ENCODE measurements at regions of chr2 and their contacts with region 1.

Region 1: DNA sequence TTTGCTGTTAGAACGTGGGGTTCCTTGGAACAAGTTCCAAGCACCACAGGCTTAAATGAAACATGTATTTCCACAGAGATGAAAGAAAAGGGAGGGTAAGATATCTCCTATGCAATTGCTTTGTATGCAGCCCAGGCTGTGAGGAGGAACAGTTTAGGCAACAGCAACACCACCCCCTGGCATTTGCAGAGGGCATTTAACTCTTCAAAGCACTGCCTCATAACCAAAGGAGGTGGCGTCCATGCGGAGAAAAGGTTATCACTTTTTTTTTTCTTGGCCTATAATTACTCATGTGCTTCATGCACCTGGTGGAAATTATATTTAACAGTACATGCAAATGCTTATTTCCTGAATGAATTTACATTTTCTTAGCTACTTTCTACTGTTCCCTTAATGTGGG is 286.0 kb downstream of the LPIN1 start:
- DNase-seq: peak; percentile 71
- ATAC-seq: peak; percentile 91
- H3K4me3 ChIP-seq: no peak overlapping the region
- H3K27ac ChIP-seq: 0 out of 2 replicates have a peak overlapping the region, but pooled peaks have one; percentile 1
- H3K4me1 ChIP-seq: peaks cover 44% of the 10 kb centered on the region
- H3K27me3 ChIP-seq: no peaks in the 10 kb centered on the region
- CTCF ChIP-seq: peak; percentile 36 to 45 (median 45); a peak in 4 of 6 replicates
- EP300 ChIP-seq: 0 out of 4 replicates have a peak, but pooled peaks of 1 of the 2 experiments have one; percentile 9
- POLR2A ChIP-seq: no peak
- RAD21 ChIP-seq: peak; percentile 65

Region 2: DNA sequence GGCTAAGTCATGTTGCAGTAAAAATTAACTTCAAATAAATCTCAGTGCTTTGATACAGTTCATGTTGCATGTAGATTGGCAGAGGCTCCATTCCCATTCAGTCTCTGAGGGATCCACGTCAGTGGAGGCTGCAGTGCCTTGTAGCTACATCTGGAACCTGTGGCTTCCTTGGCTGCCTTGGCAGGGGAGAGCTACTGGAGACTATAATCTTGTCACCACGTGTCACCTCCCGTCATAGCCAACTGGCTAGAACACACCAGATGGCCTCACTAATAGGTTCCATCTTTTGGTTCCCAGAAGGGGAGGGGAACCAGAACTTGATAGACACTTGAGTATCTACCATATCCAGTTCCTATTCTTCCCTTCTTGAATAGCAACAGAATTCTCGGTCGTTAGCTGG is 594.8 kb before region 1 on chr2:
- CTCF ChIA-PET with region 1: no interaction called
- POLR2A ChIA-PET with region 1: no interaction called
- RAD21 ChIA-PET with region 1: no interaction called
- SMC1A ChIA-PET with region 1: no interaction called
- in situ Hi-C with region 1: no loop called
- intact Hi-C with region 1: no loop called
- DNase-seq: no peak
- ATAC-seq: no peak
- H3K4me3 ChIP-seq: no peak overlapping the region
- H3K27ac ChIP-seq: no peak overlapping the region
- H3K4me1 ChIP-seq: no peaks in the 10 kb centered on the region
- H3K27me3 ChIP-seq: no peaks in the 10 kb centered on the region
- CTCF ChIP-seq: no peak
- EP300 ChIP-seq: no peak
- POLR2A ChIP-seq: no peak
- RAD21 ChIP-seq: no peak

Region 3: GRCh38 chr2:11873356-11874154 is 158.8 kb before region 1 on chr2:
- CTCF ChIA-PET with region 1: interaction called, 3 read pairs
- POLR2A ChIA-PET with region 1: interaction called, 5 read pairs
- RAD21 ChIA-PET with region 1: interaction called, 79 read pairs
- SMC1A ChIA-PET with region 1: interaction called, 11 read pairs
- in situ Hi-C with region 1: no loop called
- intact Hi-C with region 1: loop called (anchors 1 kb)
- DNase-seq: no peak
- ATAC-seq: no peak
- H3K4me3 ChIP-seq: no peak overlapping the region; the same call in 1 of the 2 replicates
- H3K27ac ChIP-seq: no peak overlapping the region; the same call in 1 of the 2 replicates
- H3K4me1 ChIP-seq: peaks cover 12% of the 10 kb centered on the region
- H3K27me3 ChIP-seq: no peaks in the 10 kb centered on the region
- CTCF ChIP-seq: no peak
- EP300 ChIP-seq: no peak
- POLR2A ChIP-seq: no peak
- RAD21 ChIP-seq: no peak

Region 4: DNA sequence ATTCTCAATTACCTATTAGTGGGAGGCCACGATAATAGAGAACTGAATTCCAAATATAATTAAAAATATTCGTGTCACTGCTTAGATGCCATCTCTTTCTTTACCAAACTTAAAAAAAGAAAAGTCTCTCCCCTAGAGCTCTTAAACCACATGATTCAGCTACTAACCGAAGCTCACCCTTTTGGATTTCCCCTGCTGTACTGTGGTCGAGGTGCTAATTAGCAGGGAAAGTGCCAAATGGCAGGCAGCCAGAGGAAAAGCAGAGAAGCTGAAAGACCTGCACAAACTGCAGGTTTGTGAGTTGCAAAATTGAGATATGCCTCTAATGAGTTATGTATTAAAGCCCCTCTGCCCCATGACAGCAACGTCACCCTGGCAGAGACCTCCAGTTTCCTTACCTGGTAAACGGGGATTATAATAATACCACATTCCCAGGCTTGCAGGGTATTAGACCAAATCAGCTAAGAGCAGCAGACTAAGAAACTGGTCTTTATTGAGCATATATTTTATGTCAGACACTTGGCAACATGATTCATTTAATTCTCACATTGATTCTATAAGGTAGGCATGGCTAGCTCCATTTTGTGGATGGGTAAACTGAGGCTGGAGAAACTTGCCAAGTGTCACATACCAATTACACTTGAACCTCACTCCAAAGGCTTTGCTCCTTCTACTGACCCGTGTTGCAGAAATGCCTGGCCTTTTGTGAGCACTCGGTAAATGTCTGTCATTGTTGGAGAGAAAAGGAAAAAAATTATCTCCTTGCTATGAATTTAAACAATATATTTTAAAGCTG is 26.3 kb before region 1 on chr2:
- CTCF ChIA-PET with region 1: interaction called, 13 read pairs
- POLR2A ChIA-PET with region 1: interaction called, 3 read pairs
- RAD21 ChIA-PET with region 1: interaction called, 21 read pairs
- SMC1A ChIA-PET with region 1: interaction called, 42 read pairs
- in situ Hi-C with region 1: no loop called
- intact Hi-C with region 1: no loop called
- DNase-seq: peak; percentile 89
- ATAC-seq: peak; percentile 84
- H3K4me3 ChIP-seq: no peak overlapping the region
- H3K27ac ChIP-seq: peak overlapping the region; percentile 71; the same call in 1 of the 2 replicates
- H3K4me1 ChIP-seq: peaks cover 61% of the 10 kb centered on the region
- H3K27me3 ChIP-seq: no peaks in the 10 kb centered on the region
- CTCF ChIP-seq: no peak
- EP300 ChIP-seq: peak; percentile 93 to 95
- POLR2A ChIP-seq: no peak
- RAD21 ChIP-seq: no peak

Region 5: DNA sequence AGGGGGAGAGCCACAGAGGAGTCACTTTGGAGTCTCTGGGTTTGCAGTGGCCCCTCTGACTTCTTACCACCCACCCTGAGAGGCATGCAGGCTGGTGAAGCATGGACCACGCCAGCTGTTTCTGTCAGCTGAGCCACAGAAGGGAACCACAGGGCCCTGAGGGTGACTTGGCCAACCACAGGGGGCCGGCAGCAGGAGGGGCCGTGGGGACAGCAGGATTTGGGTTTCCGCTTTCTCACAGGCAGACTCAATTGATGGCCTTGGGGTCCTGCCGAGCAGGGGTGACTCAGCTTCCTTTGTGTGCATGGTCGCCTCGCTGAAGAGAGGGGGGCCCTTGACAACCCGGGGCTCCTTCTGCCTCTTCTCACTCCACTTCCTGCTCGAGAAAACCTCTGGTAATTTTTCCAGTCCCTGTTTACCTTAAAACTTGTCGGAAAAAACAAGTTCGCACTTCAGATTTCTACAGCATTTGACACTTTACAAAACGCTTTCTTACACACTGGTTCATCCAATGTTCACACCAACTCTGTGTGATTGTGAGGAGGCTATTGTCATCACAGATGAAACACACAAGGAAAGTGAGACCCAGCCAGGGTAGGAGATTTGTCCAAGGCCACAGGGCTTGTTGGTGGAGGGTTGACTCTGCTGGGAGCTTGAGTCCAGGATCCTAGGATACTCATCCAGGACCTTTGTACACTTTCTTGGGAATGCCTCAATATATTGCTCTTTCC is 25.2 kb after region 1 on chr2:
- CTCF ChIA-PET with region 1: no interaction called
- POLR2A ChIA-PET with region 1: interaction called, 4 read pairs
- RAD21 ChIA-PET with region 1: interaction called, 3 read pairs
- SMC1A ChIA-PET with region 1: interaction called, 7 read pairs
- in situ Hi-C with region 1: no loop called
- intact Hi-C with region 1: loop called (anchors 1 kb)
- DNase-seq: peak; percentile 89
- ATAC-seq: peak; percentile 95
- H3K4me3 ChIP-seq: no peak overlapping the region
- H3K27ac ChIP-seq: peak overlapping the region; percentile 45
- H3K4me1 ChIP-seq: peaks cover 17% of the 10 kb centered on the region
- H3K27me3 ChIP-seq: no peaks in the 10 kb centered on the region
- CTCF ChIP-seq: no peak
- EP300 ChIP-seq: peak; percentile 72 to 74
- POLR2A ChIP-seq: no peak
- RAD21 ChIP-seq: no peak

Measured in GM12878 (cell line).